ENCODE measurements at regions of chr10 and their contacts with region 1.

Region 1: GRCh38 chr10:79195091-79195923 is 126.5 kb downstream of the ZMIZ1 start:
- DNase-seq: peak; percentile 75 to 91 (median 86)
- H3K4me3 ChIP-seq: peak overlapping the region in 35 of 59 donors; percentile 4 to 53 (median 34)
- H3K27ac ChIP-seq: peak overlapping the region in 43 of 59 donors; percentile 2 to 81 (median 54)
- H3K27me3 ChIP-seq: no peaks in the 10 kb centered on the region
- CTCF ChIP-seq: peak; percentile 92 to 100 (median 98)

Region 2: DNA sequence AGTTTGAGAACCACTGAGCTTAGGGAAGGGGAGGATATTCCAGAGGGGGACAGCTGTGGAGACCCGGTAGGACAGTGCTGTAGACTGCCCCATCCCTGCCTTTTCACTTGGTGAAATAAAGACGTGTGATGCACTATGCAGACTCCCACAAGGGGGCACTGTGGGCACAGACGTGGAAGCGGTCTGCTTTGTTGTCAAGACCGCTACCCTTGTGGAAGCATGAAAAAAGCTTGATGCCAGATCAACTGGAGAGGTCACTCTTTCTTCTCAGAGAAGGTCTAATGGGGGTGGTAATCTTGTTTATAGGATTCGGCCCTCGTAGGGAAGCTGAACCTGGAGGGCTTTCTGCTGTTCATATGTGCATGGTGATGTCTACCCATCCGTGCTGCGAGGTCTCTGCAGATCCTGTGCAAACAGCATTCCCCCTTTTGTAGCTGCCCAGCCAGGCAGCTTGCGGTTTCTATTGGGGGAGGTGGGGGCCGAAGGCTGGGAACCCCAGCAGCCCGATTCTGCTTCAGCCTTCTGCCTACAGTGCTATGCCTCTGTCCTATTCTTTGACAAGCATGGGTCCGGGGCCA is 1147.9 kb before region 1 on chr10:
- intact Hi-C with region 1: loop called (anchors 2 to 5 kb)
- DNase-seq: peak; percentile 88 to 98 (median 92)
- H3K4me3 ChIP-seq: peak overlapping the region in 17 of 59 donors; percentile 10 to 32 (median 22)
- H3K27ac ChIP-seq: peak overlapping the region in 12 of 59 donors; percentile 19 to 66 (median 42)
- H3K27me3 ChIP-seq: no peaks in the 10 kb centered on the region
- CTCF ChIP-seq: peak; percentile 88 to 99 (median 94)

Region 3: GRCh38 chr10:78302989-78303854 is 892.1 kb before region 1 on chr10:
- intact Hi-C with region 1: loop called (anchors 2 kb)
- DNase-seq: peak; percentile 79 to 95 (median 90)
- H3K4me3 ChIP-seq: peak overlapping the region; percentile 36 to 78 (median 65)
- H3K27ac ChIP-seq: peak overlapping the region; percentile 70 to 99 (median 96)
- H3K27me3 ChIP-seq: no peaks in the 10 kb centered on the region
- CTCF ChIP-seq: peak; percentile 14 to 73 (median 57)

Region 4: DNA sequence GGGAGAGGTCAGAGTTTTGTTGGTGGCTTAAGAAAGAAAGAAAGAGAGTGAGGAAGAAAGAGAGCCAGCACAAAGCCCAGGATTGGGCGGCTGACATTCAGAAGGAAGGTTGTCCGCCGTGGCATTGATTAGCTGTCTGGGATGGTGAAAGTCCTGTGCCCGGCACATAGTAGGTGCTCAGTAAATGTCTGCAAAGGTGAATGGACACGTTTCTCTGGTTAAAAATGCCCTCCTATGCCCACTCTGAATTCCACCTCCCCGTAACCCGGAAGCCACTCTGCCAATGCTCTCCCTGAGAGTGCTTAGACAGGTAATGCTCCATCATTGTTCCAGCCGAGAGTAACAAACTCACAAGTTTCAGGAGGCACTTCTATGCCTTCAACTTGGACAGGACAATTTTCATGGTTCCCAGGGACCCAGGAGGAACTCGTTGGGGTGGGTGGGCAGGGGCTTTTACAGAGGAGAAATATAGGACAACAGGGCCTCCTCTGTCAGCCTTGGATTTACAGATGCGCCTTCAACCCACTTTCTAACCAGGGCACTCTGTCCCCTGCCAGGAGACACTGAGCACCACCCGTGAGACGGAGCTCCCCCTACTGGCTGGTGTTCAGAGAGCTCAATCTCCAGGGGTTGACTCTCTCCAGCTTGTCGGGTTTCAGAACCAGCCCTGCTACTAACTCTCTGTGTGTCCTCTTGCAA is 538.0 kb before region 1 on chr10:
- intact Hi-C with region 1: loop called in 1 of 2 experiments (anchors 5 kb)
- DNase-seq: peak; percentile 19 to 70 (median 58)
- H3K4me3 ChIP-seq: peak overlapping the region in 2 of 59 donors; percentile 9 to 25
- H3K27ac ChIP-seq: peak overlapping the region in 4 of 59 donors; percentile 8 to 54 (median 15)
- H3K27me3 ChIP-seq: no peaks in the 10 kb centered on the region
- CTCF ChIP-seq: peak in 55 of 56 donors; percentile 23 to 73 (median 61)

Region 5: GRCh38 chr10:78856421-78856820 is 338.9 kb before region 1 on chr10:
- intact Hi-C with region 1: loop called in 1 of 2 experiments (anchors 5 kb)
- DNase-seq: peak; percentile 19 to 93 (median 88)
- H3K4me3 ChIP-seq: no peak overlapping the region
- H3K27ac ChIP-seq: peak overlapping the region in 1 of 59 donors; percentile 29
- H3K27me3 ChIP-seq: no peaks in the 10 kb centered on the region
- CTCF ChIP-seq: peak in 12 of 56 donors; percentile 10 to 45 (median 24)

Region 6: GRCh38 chr10:79149662-79150443 is 45.5 kb before region 1 on chr10:
- intact Hi-C with region 1: loop called (anchors 5 kb)
- DNase-seq: no peak
- H3K4me3 ChIP-seq: no peak overlapping the region
- H3K27ac ChIP-seq: peak overlapping the region in 55 of 59 donors; percentile 56 to 91 (median 83)
- H3K27me3 ChIP-seq: no peaks in the 10 kb centered on the region
- CTCF ChIP-seq: no peak